ENCODE measurements at regions of chr13 and their contacts with region 1.

Region 1: GRCh38 chr13:97212601-97213040 is 9.5 kb upstream of the MBNL2 start:
- DNase-seq: peak; percentile 49
- H3K4me3 ChIP-seq: no peak overlapping the region
- H3K27ac ChIP-seq: no peak overlapping the region
- H3K4me1 ChIP-seq: no peaks in the 10 kb centered on the region
- H3K27me3 ChIP-seq: no peaks in the 10 kb centered on the region
- CTCF ChIP-seq: peak; percentile 47

Region 2: DNA sequence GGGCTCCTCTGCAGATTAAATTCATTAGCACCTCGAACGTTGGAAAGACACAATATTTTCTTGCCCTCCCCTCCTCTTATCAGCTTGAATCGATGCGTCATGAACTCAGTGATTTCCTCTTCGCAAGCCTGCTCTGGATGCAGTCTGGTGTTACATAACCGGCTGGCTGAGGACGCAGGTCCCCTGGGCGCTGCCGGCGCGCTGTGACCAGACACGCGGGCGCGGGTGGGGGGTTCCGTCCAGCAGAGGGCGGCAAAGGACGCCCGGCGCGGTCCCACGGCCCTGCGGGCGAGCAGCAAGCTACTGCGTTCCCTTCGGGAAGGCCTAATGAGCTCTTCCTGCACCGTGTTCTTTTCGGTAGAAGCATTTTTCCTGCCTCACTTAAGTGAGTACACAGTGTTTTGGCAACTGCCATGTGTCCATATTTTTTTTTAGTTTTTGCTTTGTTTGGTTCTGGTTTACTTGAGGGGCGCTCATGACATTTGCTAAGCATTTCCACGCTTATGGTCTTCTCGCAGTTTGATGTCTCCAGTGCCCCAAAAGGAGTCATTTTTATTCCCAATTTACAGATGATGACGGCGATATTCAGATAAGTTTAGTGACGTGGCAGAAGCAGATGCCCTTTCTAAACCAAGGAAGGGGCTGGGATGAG is 102.7 kb before region 1 on chr13:
- intact Hi-C with region 1: loop called (anchors 5 kb)
- DNase-seq: peak; percentile 89
- H3K4me3 ChIP-seq: no peak overlapping the region
- H3K27ac ChIP-seq: no peak overlapping the region
- H3K4me1 ChIP-seq: no peaks in the 10 kb centered on the region
- H3K27me3 ChIP-seq: no peaks in the 10 kb centered on the region
- CTCF ChIP-seq: peak; percentile 95

Region 3: DNA sequence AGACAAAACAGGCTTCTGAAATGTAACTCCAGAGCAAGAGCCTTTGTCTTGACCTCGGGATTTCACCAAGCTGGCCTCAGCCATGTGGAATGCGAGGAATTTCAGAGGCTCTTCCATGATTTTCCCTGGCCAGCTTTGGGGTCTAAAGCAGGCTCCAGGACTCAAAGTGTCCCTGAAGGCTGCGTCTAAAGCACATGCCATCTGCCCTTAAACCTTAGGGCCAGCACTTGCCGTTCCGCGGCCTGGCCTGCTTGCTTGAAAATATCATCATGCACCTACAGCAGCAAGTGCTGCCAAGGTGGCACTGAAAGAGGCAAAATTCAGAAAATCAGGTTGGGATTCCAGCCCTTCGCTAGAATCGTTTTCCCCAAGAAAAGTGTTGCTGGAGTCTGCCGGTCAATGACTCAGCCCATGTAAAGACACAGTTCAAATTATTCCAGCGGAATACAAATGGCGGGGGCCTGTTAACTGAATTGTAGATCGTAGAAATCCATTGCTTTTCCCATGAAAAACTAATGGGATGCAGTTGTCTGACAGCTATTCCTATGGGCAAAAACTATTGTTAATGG is 115.7 kb after region 1 on chr13:
- intact Hi-C with region 1: no loop called
- DNase-seq: no peak
- H3K4me3 ChIP-seq: no peak overlapping the region
- H3K27ac ChIP-seq: no peak overlapping the region
- H3K4me1 ChIP-seq: no peaks in the 10 kb centered on the region
- H3K27me3 ChIP-seq: no peaks in the 10 kb centered on the region
- CTCF ChIP-seq: no peak